A673 (cell line): ENCODE measurements at regions of chr4 and their contacts with region 1.

Region 1: GRCh38 chr4:42865572-42866189 is 26.8 kb upstream of the GRXCR1 start:
- DNase-seq: peak; percentile 60
- H3K4me3 ChIP-seq: no peak overlapping the region
- H3K27ac ChIP-seq: no peak overlapping the region
- H3K4me1 ChIP-seq: no peaks in the 10 kb centered on the region
- H3K27me3 ChIP-seq: no peaks in the 10 kb centered on the region
- CTCF ChIP-seq: peak; percentile 74

Region 2: GRCh38 chr4:42282081-42282901 is 583.4 kb before region 1 on chr4:
- CTCF ChIA-PET with region 1: no interaction called
- POLR2A ChIA-PET with region 1: no interaction called
- intact Hi-C with region 1: loop called (anchors 5 kb)
- DNase-seq: peak; percentile 85
- H3K4me3 ChIP-seq: no peak overlapping the region
- H3K27ac ChIP-seq: no peak overlapping the region
- H3K4me1 ChIP-seq: no peaks in the 10 kb centered on the region
- H3K27me3 ChIP-seq: no peaks in the 10 kb centered on the region
- CTCF ChIP-seq: peak; percentile 80

Region 3: GRCh38 chr4:42371306-42372252 is 494.1 kb before region 1 on chr4:
- CTCF ChIA-PET with region 1: no interaction called
- POLR2A ChIA-PET with region 1: no interaction called
- intact Hi-C with region 1: loop called (anchors 5 kb)
- DNase-seq: peak; percentile 57
- H3K4me3 ChIP-seq: no peak overlapping the region
- H3K27ac ChIP-seq: no peak overlapping the region
- H3K4me1 ChIP-seq: no peaks in the 10 kb centered on the region
- H3K27me3 ChIP-seq: no peaks in the 10 kb centered on the region
- CTCF ChIP-seq: peak; percentile 67

Region 4: GRCh38 chr4:42566835-42567234 is 298.8 kb before region 1 on chr4:
- CTCF ChIA-PET with region 1: interaction called, 3 read pairs
- POLR2A ChIA-PET with region 1: no interaction called
- intact Hi-C with region 1: loop called (anchors 1 kb)
- DNase-seq: no peak
- H3K4me3 ChIP-seq: no peak overlapping the region
- H3K27ac ChIP-seq: no peak overlapping the region
- H3K4me1 ChIP-seq: no peaks in the 10 kb centered on the region
- H3K27me3 ChIP-seq: no peaks in the 10 kb centered on the region
- CTCF ChIP-seq: no peak